CD4-positive, alpha-beta memory T cell (primary cell): ENCODE measurements at regions of chr17 and their contacts with region 1.

Region 1: DNA sequence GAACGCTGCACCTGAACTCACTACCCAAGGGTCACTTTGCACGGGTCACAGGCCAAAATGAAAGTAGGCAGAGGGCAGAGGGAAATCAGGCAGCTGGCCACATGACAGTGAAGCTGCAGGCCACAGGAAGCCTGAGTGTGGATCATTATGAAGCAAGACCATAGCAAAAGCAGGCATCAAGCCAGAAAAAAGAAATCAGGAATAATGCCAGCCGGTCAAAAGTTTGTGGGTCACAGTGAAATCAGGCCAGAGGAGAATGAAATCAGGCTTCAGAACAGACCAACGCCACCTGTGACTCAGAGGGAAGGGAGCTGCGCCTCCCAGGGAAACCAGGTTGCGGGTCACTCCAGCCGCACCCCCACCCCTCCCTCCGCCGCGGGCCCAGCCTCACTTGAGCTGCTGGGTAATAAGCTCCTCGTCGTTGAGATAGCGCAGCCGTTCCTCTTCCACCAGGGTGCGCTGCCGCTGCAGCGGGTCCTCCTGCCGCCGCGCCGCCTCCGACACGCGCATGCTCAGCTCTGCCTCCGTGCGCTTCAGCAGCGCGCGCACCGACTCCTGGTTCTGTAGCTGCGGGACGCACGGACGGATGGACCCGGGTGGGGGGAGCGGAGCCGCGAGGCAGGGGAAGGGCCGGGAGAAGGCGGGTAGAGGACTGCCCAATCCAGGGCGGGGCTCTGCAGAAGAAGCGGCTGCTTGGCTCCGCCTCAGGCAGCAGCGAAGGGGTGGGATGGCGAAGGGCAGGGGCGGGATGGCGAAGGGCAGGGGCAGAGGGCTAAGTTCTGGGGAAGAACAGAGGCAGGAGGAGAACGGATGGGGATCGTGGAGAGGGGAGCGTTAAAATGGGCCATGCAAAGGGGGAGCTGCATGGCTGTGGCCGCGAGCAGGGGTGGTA is 47.7 kb downstream of the SRCIN1 start:
- DNase-seq: peak; percentile 86 to 87 (median 86)
- H3K4me3 ChIP-seq: peak overlapping the region; percentile 83 to 88
- H3K4me3 Mint-ChIP-seq: peak overlapping the region; percentile 89 to 98 (median 98)
- H3K27ac ChIP-seq: no peak overlapping the region
- H3K27ac Mint-ChIP-seq: peak overlapping the region in 6 of 7 donors; percentile 84 to 95 (median 92)
- H3K4me1 ChIP-seq: peaks cover 28% of the 10 kb centered on the region
- H3K4me1 Mint-ChIP-seq: peaks cover 8 to 40% (median 21%) of the 10 kb centered on the region in 4 donors
- H3K27me3 ChIP-seq: peaks cover 18% of the 10 kb centered on the region
- H3K27me3 Mint-ChIP-seq: peaks cover 10 to 11% of the 10 kb centered on the region in 2 donors

Region 2: DNA sequence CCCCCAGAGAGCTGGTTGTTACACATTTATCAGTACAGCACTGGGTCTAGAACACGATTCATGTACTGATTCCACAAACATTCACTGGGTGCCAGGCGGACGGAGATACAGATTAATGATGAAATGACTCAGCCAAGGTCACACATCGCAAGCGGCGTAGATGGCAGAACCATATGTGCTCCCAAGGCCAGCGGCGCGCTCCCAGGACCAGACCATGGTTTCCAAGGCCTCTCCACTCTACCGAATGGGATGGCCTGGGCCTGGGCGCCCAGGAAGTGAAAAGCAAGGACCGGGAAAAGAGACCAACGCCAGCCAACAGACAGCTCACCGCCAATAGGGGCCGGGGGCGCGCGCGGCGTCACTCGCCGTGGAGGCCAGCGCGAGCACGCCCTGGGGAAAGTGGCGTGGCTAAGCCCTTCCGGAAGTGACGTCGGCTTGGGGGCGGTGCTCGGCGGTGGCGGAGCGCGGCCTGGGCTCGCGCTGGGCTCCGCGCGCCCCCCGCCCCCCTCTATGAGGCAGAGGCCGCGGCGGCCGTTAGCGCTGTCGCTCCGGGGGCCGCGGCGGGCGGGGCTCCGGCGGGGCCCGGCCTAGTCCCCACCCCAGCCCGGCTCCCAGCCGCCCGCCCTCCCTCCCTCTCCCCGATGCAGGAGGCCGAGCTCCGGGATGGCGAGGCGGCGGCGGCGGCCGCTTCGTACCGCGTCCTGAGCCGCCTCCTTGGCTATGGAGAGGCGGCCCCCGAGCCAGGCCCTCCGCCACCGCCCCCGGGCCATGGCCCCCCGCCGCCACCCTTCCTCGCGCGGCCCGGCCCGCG is 206.5 kb before region 1 on chr17 and contains the start of gene SOCS7:
- CTCF ChIA-PET with region 1: no interaction called
- POLR2A ChIA-PET with region 1: no interaction called
- intact Hi-C with region 1: loop called (anchors 2 kb)
- DNase-seq: peak; percentile 88 to 92 (median 89)
- H3K4me3 ChIP-seq: peak within 1 kb of the TSS; percentile 20 to 79
- H3K4me3 Mint-ChIP-seq: peak within 1 kb of the TSS; percentile 95 to 99 (median 98)
- H3K27ac ChIP-seq: peak within 1 kb of the TSS; percentile 62
- H3K27ac Mint-ChIP-seq: peak within 1 kb of the TSS; percentile 87 to 99 (median 97)
- H3K4me1 ChIP-seq: peaks cover 34% of the 10 kb centered on the region
- H3K4me1 Mint-ChIP-seq: peaks cover 33 to 62% (median 43%) of the 10 kb centered on the region in 4 donors
- H3K27me3 ChIP-seq: no peaks in the 10 kb centered on the region
- H3K27me3 Mint-ChIP-seq: peaks cover 0 to 2% of the 10 kb centered on the region in 2 donors
- total RNA-seq, gene SOCS7: 23.1 to 24.7 TPM

Region 3: DNA sequence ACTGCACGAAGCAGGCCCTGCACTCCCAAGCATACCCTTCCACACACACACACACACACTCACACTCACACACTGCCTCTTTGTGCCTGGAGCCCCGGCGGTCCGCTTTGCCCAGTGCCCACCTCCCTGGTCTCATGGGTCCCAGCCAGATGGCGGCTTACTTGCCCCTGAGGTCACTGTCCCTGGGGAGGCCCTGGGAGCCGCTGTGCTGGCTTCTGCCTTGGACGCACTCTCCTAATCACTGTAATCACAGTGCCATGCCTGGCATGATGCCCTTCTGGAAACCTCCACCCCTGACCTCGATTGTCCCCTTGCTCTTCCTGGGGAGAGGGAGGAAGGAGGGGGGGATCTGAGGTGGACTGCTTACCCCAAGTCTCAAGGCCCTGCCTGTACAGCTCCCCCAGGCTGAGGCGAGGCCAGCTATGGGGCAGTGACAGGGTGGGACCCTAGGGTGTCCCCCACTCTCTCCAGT is 93.8 kb before region 1 on chr17:
- CTCF ChIA-PET with region 1: no interaction called
- POLR2A ChIA-PET with region 1: no interaction called
- intact Hi-C with region 1: no loop called
- DNase-seq: no peak
- H3K4me3 ChIP-seq: no peak overlapping the region
- H3K4me3 Mint-ChIP-seq: no peak overlapping the region
- H3K27ac ChIP-seq: no peak overlapping the region
- H3K27ac Mint-ChIP-seq: no peak overlapping the region
- H3K4me1 ChIP-seq: no peaks in the 10 kb centered on the region
- H3K4me1 Mint-ChIP-seq: no peaks in the 10 kb centered on the region
- H3K27me3 ChIP-seq: no peaks in the 10 kb centered on the region
- H3K27me3 Mint-ChIP-seq: peaks cover 6 to 14% of the 10 kb centered on the region in 2 donors

Region 4: GRCh38 chr17:38512473-38513058 is 45.5 kb before region 1 on chr17:
- CTCF ChIA-PET with region 1: no interaction called
- POLR2A ChIA-PET with region 1: no interaction called
- intact Hi-C with region 1: no loop called
- DNase-seq: no peak
- H3K4me3 ChIP-seq: no peak overlapping the region
- H3K4me3 Mint-ChIP-seq: no peak overlapping the region
- H3K27ac ChIP-seq: no peak overlapping the region
- H3K27ac Mint-ChIP-seq: peak overlapping the region in 1 of 7 donors; percentile 37
- H3K4me1 ChIP-seq: peaks cover 7% of the 10 kb centered on the region
- H3K4me1 Mint-ChIP-seq: peaks cover 3 to 21% (median 9%) of the 10 kb centered on the region in 4 donors
- H3K27me3 ChIP-seq: peaks cover 11% of the 10 kb centered on the region
- H3K27me3 Mint-ChIP-seq: peaks cover 27 to 48% of the 10 kb centered on the region in 2 donors

Region 5: DNA sequence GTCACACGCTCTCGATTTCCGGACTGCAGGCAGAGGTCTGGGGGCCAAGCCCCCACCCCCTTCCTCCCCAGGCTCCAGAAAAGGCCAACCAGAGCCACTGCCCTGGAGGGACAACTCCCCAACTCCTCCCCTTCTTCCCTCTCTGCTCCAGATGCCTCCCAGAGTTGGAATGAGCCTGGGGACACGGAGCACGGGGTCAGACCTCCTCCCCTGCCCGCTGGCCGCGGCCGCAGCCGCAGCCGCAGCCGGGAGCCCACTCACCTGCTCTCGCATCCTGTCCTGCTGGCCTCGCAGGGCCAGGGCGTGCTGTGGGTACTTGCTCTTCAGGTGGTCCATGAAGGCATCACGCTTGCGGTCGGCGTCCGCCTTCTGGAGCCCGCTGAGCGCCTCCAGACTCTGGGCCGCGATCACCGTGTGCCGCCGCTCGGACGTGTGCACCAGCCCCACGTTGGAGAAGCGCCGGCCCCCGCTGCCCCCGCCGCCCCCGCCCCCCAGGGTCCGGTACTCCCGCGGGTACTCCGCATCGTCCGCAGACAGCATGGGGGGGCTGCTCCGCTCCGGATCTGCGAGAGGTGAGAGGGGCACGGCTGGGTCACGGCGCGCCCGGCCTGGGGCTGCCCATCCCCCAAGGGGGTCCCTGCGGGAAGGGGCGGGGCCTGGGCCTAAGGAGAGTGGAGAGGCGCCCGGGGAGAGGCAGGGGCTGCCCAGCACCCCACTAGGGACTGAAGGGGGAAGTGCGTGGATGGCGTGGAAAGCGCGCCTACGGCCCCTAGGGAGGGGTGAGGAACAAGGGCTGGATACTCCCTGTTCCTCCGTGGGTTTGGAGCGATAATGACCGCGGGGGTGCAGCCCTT is 20.4 kb after region 1 on chr17:
- CTCF ChIA-PET with region 1: interaction called, 144 read pairs
- POLR2A ChIA-PET with region 1: interaction called, 6 read pairs
- intact Hi-C with region 1: loop called (anchors 2 kb)
- DNase-seq: peak in 1 of 5 donors; percentile 27
- H3K4me3 ChIP-seq: no peak overlapping the region
- H3K4me3 Mint-ChIP-seq: no peak overlapping the region
- H3K27ac ChIP-seq: no peak overlapping the region
- H3K27ac Mint-ChIP-seq: no peak overlapping the region
- H3K4me1 ChIP-seq: no peaks in the 10 kb centered on the region
- H3K4me1 Mint-ChIP-seq: peaks cover 0 to 8% (median under 1%) of the 10 kb centered on the region in 4 donors
- H3K27me3 ChIP-seq: peaks cover 41% of the 10 kb centered on the region
- H3K27me3 Mint-ChIP-seq: peaks cover 62 to 72% of the 10 kb centered on the region in 2 donors

Region 6: DNA sequence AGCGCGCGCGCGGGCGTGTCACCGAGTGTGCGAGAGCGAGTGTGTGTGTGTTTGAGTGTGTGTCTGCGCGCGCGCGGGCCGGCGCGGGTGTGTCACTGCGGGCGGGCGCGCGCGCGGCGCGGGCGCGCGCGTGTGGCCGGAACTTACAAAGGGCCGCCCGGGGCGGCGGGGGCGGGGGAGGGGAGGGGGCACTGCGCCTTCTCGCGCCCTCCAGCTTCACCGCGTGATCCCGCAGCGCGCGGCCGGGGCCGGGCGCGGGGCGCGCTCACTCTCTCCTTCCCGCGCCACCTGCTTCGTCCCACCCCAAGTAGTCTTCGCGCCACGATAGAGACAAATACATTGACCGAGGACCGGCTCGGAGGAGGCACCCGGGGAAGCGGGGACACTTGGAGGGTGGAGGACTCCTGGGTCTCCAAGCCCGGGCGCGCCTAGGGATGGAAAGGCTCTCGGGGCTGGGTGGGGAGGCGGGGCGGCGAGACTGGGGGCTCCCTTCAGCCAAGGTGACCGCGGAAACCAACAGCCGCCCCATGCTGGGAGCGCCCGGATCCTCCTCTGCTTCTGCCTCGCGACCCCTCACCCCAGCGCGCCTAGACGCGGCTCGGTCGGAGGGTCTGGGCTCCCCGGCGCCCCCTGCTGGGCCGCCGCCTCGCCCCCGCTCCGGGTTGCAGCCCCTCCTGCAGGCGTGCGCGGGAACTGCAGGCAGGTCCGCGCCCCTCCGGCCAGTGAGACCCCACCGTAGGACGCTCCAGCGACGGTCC is 48.0 kb after region 1 on chr17 and contains the start of gene SRCIN1:
- CTCF ChIA-PET with region 1: interaction called, 19 read pairs
- POLR2A ChIA-PET with region 1: no interaction called
- intact Hi-C with region 1: no loop called
- DNase-seq: peak in 4 of 5 donors; percentile 23 to 32 (median 27)
- H3K4me3 ChIP-seq: peak within 1 kb of the TSS in 1 of 2 donors; percentile 32
- H3K4me3 Mint-ChIP-seq: peak within 1 kb of the TSS; percentile 57 to 77 (median 72)
- H3K27ac ChIP-seq: no peak within 1 kb of the TSS
- H3K27ac Mint-ChIP-seq: no peak within 1 kb of the TSS
- H3K4me1 ChIP-seq: peaks cover 13% of the 10 kb centered on the region
- H3K4me1 Mint-ChIP-seq: peaks cover 4 to 25% (median 14%) of the 10 kb centered on the region in 4 donors
- H3K27me3 ChIP-seq: peaks cover 48% of the 10 kb centered on the region
- H3K27me3 Mint-ChIP-seq: peaks cover 44 to 59% of the 10 kb centered on the region in 2 donors
- total RNA-seq, gene SRCIN1: 0.28 to 0.79 TPM

Region 7: DNA sequence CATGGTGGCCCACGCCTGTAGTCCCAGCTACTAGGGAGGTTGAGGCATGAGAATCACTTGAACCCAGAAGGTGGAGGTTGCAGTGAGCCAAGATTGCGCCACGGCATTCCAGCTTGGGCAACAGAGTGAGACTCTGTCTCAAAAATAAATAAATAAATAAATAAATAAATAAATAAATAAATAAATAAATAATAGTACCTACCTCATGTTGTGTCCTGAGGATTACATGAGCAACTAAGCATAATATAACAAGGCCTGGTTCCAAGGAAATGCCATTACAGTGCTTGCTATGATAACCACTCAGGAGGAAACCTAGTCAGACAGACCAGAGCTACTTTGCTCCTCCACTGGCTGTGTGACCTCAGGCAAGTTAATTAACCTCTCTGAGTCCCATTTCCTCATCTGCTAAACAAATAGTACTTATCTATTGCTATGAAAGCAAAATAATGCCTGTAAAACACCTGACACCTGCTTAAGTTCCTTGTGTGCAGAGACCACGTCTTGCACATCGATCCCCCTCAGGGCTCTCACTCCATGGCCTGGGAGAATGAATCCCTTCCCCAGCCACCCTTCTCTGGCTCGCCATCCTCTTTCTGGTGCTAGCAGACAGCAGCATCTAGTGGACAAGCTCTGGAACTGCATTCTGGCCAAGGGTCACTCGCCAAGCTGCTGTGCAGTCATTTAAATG is 109.2 kb after region 1 on chr17:
- CTCF ChIA-PET with region 1: interaction called, 121 read pairs
- POLR2A ChIA-PET with region 1: interaction called, 4 read pairs
- intact Hi-C with region 1: loop called (anchors 1 kb)
- DNase-seq: peak; percentile 43 to 57 (median 51)
- H3K4me3 ChIP-seq: no peak overlapping the region
- H3K4me3 Mint-ChIP-seq: no peak overlapping the region
- H3K27ac ChIP-seq: no peak overlapping the region
- H3K27ac Mint-ChIP-seq: no peak overlapping the region
- H3K4me1 ChIP-seq: no peaks in the 10 kb centered on the region
- H3K4me1 Mint-ChIP-seq: peaks cover 0 to 8% (median 1%) of the 10 kb centered on the region in 4 donors
- H3K27me3 ChIP-seq: peaks cover 20% of the 10 kb centered on the region
- H3K27me3 Mint-ChIP-seq: peaks cover 41 to 50% of the 10 kb centered on the region in 2 donors

Region 8: GRCh38 chr17:38711792-38712571 is 153.9 kb after region 1 on chr17:
- CTCF ChIA-PET with region 1: no interaction called
- POLR2A ChIA-PET with region 1: no interaction called
- intact Hi-C with region 1: no loop called
- DNase-seq: no peak
- H3K4me3 ChIP-seq: no peak overlapping the region
- H3K4me3 Mint-ChIP-seq: no peak overlapping the region
- H3K27ac ChIP-seq: no peak overlapping the region
- H3K27ac Mint-ChIP-seq: peak overlapping the region in 4 of 7 donors; percentile 24 to 64 (median 34)
- H3K4me1 ChIP-seq: peaks cover 37% of the 10 kb centered on the region
- H3K4me1 Mint-ChIP-seq: peaks cover 19 to 65% (median 29%) of the 10 kb centered on the region in 4 donors
- H3K27me3 ChIP-seq: no peaks in the 10 kb centered on the region
- H3K27me3 Mint-ChIP-seq: no peaks in the 10 kb centered on the region

Region 9: DNA sequence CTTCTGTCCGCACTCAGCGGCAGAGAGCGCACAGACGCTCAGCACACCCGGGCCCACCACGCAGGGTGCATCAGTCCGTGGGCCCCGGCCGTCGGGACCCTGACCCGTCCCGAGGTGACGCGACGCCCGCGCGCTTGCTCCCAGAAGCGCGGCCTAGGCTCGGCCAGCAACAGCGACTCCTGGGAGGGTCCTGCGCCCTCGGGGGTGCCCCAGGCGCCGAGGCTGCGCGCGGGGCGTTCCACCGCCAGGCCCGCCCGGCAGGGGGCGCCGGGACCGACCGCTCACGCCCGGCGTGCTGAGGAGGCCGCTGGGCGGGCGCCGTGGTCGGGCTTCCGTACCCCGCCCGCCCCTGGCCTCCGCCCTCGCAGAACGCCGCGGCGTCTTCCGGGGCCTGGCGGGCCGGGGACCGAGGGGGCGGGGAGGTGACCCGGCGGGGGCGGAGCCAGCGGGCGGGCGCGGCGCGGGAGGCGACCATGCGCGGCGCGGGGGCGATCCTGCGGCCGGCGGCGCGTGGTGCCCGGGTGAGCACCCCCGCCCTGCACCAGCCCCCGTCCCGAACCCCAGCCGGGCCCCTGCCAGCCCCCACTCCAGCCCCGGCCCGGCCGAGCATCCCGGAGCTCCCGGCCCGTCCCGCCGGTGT is 171.9 kb after region 1 on chr17 and contains the start of gene CISD3:
- CTCF ChIA-PET with region 1: interaction called, 25 read pairs
- POLR2A ChIA-PET with region 1: interaction called, 11 read pairs
- intact Hi-C with region 1: loop called (anchors 1 kb)
- DNase-seq: peak; percentile 82 to 89 (median 87)
- H3K4me3 ChIP-seq: peak within 1 kb of the TSS; percentile 67 to 83
- H3K4me3 Mint-ChIP-seq: peak within 1 kb of the TSS; percentile 92 to 99 (median 97)
- H3K27ac ChIP-seq: peak within 1 kb of the TSS; percentile 72
- H3K27ac Mint-ChIP-seq: peak within 1 kb of the TSS; percentile 94 to 99 (median 97)
- H3K4me1 ChIP-seq: peaks cover 87% of the 10 kb centered on the region
- H3K4me1 Mint-ChIP-seq: peaks cover 45 to 93% (median 71%) of the 10 kb centered on the region in 4 donors
- H3K27me3 ChIP-seq: no peaks in the 10 kb centered on the region
- H3K27me3 Mint-ChIP-seq: no peaks in the 10 kb centered on the region
- total RNA-seq, gene CISD3: 12.5 to 13.5 TPM

Region 10: GRCh38 chr17:38752119-38752929 is 194.2 kb after region 1 on chr17 and contains the start of gene PSMB3:
- CTCF ChIA-PET with region 1: interaction called, 4 read pairs
- POLR2A ChIA-PET with region 1: no interaction called
- intact Hi-C with region 1: loop called (anchors 5 kb)
- DNase-seq: peak; percentile 95 to 99 (median 97)
- H3K4me3 ChIP-seq: peak within 1 kb of the TSS; percentile 81 to 94
- H3K4me3 Mint-ChIP-seq: peak within 1 kb of the TSS; percentile 95 to 100 (median 99)
- H3K27ac ChIP-seq: peak within 1 kb of the TSS; percentile 84
- H3K27ac Mint-ChIP-seq: peak within 1 kb of the TSS; percentile 93 to 100 (median 98)
- H3K4me1 ChIP-seq: peaks cover 57% of the 10 kb centered on the region
- H3K4me1 Mint-ChIP-seq: peaks cover 25 to 57% (median 43%) of the 10 kb centered on the region in 4 donors
- H3K27me3 ChIP-seq: peaks cover 24% of the 10 kb centered on the region
- H3K27me3 Mint-ChIP-seq: peaks cover 7 to 16% of the 10 kb centered on the region in 2 donors
- total RNA-seq, gene PSMB3: 93.5 to 99.0 TPM